CD4-positive, alpha-beta T cell (primary cell): ENCODE measurements at regions of chr10 and their contacts with region 1.

Region 1: GRCh38 chr10:132307823-132308587 is at the start of gene STK32C:
- DNase-seq: peak; percentile 86 to 99 (median 90)
- ATAC-seq: peak; percentile 85
- H3K4me3 ChIP-seq: peak within 1 kb of the TSS; percentile 69
- H3K4me3 Mint-ChIP-seq: peak within 1 kb of the TSS; percentile 93
- H3K27ac ChIP-seq: no peak within 1 kb of the TSS
- H3K27ac Mint-ChIP-seq: peak within 1 kb of the TSS; percentile 61
- H3K4me1 ChIP-seq: peaks cover 16% of the 10 kb centered on the region
- H3K4me1 Mint-ChIP-seq: peaks cover 13% of the 10 kb centered on the region
- H3K27me3 ChIP-seq: no peaks in the 10 kb centered on the region
- H3K27me3 Mint-ChIP-seq: no peaks in the 10 kb centered on the region
- CTCF ChIP-seq: no peak
- total RNA-seq, gene STK32C: 4.9 to 5.2 TPM

Region 2: GRCh38 chr10:132185601-132186487 is 122.2 kb before region 1 on chr10:
- CTCF ChIA-PET with region 1: no interaction called
- POLR2A ChIA-PET with region 1: no interaction called
- intact Hi-C with region 1: loop called in 1 of 2 experiments (anchors 5 kb)
- DNase-seq: peak; percentile 15 to 86 (median 56)
- ATAC-seq: peak; percentile 93
- H3K4me3 ChIP-seq: peak overlapping the region; percentile 49
- H3K4me3 Mint-ChIP-seq: no peak overlapping the region
- H3K27ac ChIP-seq: no peak overlapping the region
- H3K27ac Mint-ChIP-seq: no peak overlapping the region
- H3K4me1 ChIP-seq: peaks cover 24% of the 10 kb centered on the region
- H3K4me1 Mint-ChIP-seq: peaks cover 6% of the 10 kb centered on the region
- H3K27me3 ChIP-seq: peaks cover 18 to 21% of the 10 kb centered on the region in 2 experiments
- H3K27me3 Mint-ChIP-seq: peaks cover 65% of the 10 kb centered on the region
- CTCF ChIP-seq: no peak

Region 3: DNA sequence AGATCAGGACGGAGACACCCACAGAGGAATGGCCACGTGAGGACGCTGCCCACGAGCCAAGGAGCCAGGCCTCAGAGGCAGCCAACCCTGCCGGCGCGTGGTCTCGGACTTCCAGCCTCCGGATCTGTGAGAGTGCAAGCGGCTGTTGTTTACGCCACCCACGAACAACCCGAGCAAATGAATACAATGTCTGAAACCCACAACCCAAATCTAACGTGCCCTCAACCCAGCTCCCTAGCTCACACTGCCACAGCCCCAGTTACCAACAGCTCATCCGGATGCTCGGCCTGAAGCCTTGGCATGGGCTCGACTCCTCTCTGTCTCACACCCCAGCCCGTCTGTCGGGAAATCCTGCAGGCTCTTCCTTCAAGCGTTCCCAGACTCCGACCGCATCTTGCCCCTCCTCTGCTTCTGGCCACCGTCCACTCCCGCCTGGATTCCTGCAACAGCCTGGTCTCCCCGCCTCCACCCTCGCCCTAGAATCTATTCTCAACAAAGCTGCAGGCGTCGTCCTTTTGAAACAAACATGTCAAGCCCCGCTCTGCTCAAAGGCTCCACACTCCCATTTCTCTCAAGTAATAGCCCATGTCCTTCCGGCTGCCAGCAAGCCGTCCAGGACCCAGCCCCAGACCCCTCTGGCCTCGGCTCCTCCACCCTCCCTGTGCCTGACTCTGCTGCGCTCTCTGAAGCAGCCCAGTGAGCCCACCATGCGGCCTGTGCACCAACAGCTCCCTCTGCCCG is 35.6 kb before region 1 on chr10:
- CTCF ChIA-PET with region 1: no interaction called
- POLR2A ChIA-PET with region 1: no interaction called
- intact Hi-C with region 1: no loop called
- DNase-seq: no peak
- ATAC-seq: no peak
- H3K4me3 ChIP-seq: no peak overlapping the region
- H3K4me3 Mint-ChIP-seq: no peak overlapping the region
- H3K27ac ChIP-seq: no peak overlapping the region
- H3K27ac Mint-ChIP-seq: no peak overlapping the region
- H3K4me1 ChIP-seq: no peaks in the 10 kb centered on the region
- H3K4me1 Mint-ChIP-seq: peaks cover 1% of the 10 kb centered on the region
- H3K27me3 ChIP-seq: no peaks in the 10 kb centered on the region
- H3K27me3 Mint-ChIP-seq: no peaks in the 10 kb centered on the region
- CTCF ChIP-seq: no peak

Region 4: DNA sequence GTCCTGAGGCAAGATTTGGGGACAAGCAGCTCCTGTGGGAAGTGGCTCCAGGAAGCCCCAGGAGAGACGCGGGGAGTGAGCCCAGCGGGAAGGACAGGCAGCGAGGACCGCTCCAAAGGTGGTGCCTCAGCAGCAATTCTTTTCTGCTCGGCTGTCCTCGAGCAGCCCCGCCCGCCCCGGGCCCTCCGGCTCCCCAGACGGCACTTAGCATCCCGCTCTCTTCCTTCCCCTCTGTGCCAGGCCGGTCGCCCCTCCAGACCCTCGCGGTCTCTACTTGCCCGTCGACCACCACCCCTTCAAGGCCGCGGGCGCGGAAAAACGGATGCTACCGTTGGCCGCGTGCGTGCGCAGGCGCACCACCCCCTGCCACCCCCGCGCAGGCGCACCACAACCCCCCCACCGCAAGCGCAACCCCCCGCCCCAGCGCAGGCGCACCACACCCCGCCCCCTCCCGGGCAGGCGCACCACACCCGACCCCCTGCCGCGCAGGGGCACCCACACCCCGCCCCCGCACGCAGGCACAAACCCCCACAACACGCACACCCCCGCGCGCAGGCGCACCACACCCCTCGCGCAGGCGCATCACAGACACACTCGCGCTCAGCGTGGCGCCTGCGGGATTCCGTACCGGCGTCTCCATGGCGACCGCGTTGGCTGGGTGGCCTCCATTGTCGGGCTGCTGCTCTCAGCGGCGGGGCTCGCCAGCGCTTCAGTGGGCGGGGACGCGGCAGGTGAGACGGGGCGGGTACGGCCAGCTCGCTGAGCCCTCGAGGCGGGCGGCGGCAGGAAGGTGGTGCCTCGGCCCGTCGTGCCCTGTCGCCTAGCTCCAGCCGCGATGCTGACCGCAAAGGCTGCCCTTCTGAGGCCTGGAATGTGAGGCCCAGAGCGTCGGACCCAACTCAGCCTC is 23.8 kb after region 1 on chr10 and contains the start of gene LRRC27:
- CTCF ChIA-PET with region 1: no interaction called
- POLR2A ChIA-PET with region 1: interaction called, 3 read pairs
- intact Hi-C with region 1: loop called (anchors 1 kb)
- DNase-seq: peak; percentile 99 to 100 (median 100)
- ATAC-seq: peak; percentile 86
- H3K4me3 ChIP-seq: peak within 1 kb of the TSS; percentile 86
- H3K4me3 Mint-ChIP-seq: peak within 1 kb of the TSS; percentile 95
- H3K27ac ChIP-seq: peak within 1 kb of the TSS; percentile 62 to 78
- H3K27ac Mint-ChIP-seq: peak within 1 kb of the TSS; percentile 84
- H3K4me1 ChIP-seq: peaks cover 46% of the 10 kb centered on the region
- H3K4me1 Mint-ChIP-seq: peaks cover 75% of the 10 kb centered on the region
- H3K27me3 ChIP-seq: no peaks in the 10 kb centered on the region
- H3K27me3 Mint-ChIP-seq: no peaks in the 10 kb centered on the region
- CTCF ChIP-seq: no peak
- total RNA-seq, gene LRRC27: 2.4 to 2.8 TPM

Region 5: GRCh38 chr10:132452631-132453469 is 144.8 kb after region 1 on chr10:
- CTCF ChIA-PET with region 1: no interaction called
- POLR2A ChIA-PET with region 1: no interaction called
- intact Hi-C with region 1: loop called in 1 of 2 experiments (anchors 1 kb)
- DNase-seq: peak; percentile 87 to 97 (median 92)
- ATAC-seq: peak; percentile 93
- H3K4me3 ChIP-seq: peak overlapping the region; percentile 33
- H3K4me3 Mint-ChIP-seq: peak overlapping the region; percentile 42
- H3K27ac ChIP-seq: peak overlapping the region; percentile 79 to 82
- H3K27ac Mint-ChIP-seq: peak overlapping the region; percentile 89
- H3K4me1 ChIP-seq: peaks cover 39% of the 10 kb centered on the region
- H3K4me1 Mint-ChIP-seq: peaks cover 34% of the 10 kb centered on the region
- H3K27me3 ChIP-seq: no peaks in the 10 kb centered on the region
- H3K27me3 Mint-ChIP-seq: no peaks in the 10 kb centered on the region
- CTCF ChIP-seq: peak; percentile 92

Region 6: DNA sequence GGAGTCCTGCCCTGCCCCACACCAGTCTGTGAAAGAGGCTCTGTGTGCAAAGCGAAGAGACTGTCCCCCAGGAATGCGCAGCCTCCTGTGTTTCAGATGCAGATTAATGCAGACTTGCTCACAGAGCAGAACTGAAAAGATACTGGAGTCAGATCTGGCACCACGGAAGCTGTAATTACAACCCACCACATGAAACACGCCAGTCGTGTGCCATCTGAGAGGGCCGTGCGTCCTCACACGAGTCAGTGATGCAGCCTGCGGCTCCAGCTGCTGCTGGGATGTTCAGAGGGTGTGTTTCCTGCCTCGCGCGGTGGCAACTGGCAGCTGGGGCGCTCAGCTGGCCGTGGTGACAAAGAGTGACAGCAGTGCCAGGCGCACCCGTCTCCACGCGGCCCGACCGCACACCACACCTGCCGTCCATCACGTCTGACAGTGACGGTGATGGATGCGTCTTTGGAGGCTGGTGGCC is 428.0 kb after region 1 on chr10:
- CTCF ChIA-PET with region 1: no interaction called
- POLR2A ChIA-PET with region 1: no interaction called
- intact Hi-C with region 1: no loop called
- DNase-seq: no peak
- ATAC-seq: no peak
- H3K4me3 ChIP-seq: no peak overlapping the region
- H3K4me3 Mint-ChIP-seq: no peak overlapping the region
- H3K27ac ChIP-seq: no peak overlapping the region
- H3K27ac Mint-ChIP-seq: no peak overlapping the region
- H3K4me1 ChIP-seq: no peaks in the 10 kb centered on the region
- H3K4me1 Mint-ChIP-seq: no peaks in the 10 kb centered on the region
- H3K27me3 ChIP-seq: no peaks in the 10 kb centered on the region
- H3K27me3 Mint-ChIP-seq: no peaks in the 10 kb centered on the region
- CTCF ChIP-seq: no peak

Region 7: GRCh38 chr10:133378251-133379096 is 1070.5 kb after region 1 on chr10:
- CTCF ChIA-PET with region 1: no interaction called
- POLR2A ChIA-PET with region 1: no interaction called
- intact Hi-C with region 1: loop called in 1 of 2 experiments (anchors 5 kb)
- DNase-seq: peak; percentile 39 to 78 (median 53)
- ATAC-seq: peak; percentile 58
- H3K4me3 ChIP-seq: peak overlapping the region; percentile 93
- H3K4me3 Mint-ChIP-seq: peak overlapping the region; percentile 87
- H3K27ac ChIP-seq: peak overlapping the region in 1 of 2 donors; percentile 40
- H3K27ac Mint-ChIP-seq: peak overlapping the region; percentile 24
- H3K4me1 ChIP-seq: peaks cover 34% of the 10 kb centered on the region
- H3K4me1 Mint-ChIP-seq: peaks cover 4% of the 10 kb centered on the region
- H3K27me3 ChIP-seq: no peaks in the 10 kb centered on the region
- H3K27me3 Mint-ChIP-seq: no peaks in the 10 kb centered on the region
- CTCF ChIP-seq: no peak